ENCODE measurements at regions of chr10 and their contacts with region 1.

Region 1: DNA sequence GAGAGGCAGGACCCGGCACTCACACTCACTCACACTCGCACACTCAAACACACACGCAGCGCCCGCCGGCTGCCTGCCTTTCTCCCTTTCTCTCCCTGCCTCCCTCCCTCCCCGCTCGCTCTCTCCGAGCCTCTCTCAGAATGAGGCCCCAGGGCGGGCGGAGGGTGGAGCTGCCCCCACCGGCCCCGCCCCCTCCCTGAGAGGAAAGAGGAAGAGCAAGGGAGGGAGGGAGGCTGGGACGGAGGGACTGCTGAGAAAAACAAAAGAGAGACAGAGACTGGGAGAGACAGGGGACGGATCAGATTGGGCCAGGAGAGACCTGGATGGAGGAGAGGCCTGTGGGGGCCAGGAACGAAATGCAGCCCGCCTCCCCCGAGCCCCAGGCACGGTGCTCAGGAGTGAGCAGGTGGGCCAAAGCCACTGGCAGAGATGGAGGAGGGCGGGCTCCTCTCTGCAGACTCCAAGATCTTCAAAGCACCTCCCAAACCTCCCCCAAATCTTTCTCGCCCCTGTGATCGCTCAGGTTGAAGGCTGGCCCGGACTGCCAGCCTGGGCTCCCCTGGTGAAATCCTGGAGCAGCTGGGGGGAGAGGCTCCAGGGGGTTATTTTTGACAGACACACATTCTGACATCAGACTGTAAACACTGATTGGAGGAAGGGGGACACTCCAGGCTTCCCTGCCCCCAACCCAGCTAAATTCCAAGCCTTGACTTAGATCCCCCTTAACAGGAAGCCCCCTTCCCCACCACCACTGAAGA is 5.1 kb downstream of the LDB1 start:
- DNase-seq: peak; percentile 81
- H3K4me3 ChIP-seq: peak overlapping the region in 2 of 3 experiments; percentile 32 to 58
- H3K27ac ChIP-seq: no peak overlapping the region
- H3K4me1 ChIP-seq: peaks cover 56% of the 10 kb centered on the region
- H3K27me3 ChIP-seq: no peaks in the 10 kb centered on the region
- CTCF ChIP-seq: no peak
- POLR2A ChIP-seq: peak; percentile 76

Region 2: DNA sequence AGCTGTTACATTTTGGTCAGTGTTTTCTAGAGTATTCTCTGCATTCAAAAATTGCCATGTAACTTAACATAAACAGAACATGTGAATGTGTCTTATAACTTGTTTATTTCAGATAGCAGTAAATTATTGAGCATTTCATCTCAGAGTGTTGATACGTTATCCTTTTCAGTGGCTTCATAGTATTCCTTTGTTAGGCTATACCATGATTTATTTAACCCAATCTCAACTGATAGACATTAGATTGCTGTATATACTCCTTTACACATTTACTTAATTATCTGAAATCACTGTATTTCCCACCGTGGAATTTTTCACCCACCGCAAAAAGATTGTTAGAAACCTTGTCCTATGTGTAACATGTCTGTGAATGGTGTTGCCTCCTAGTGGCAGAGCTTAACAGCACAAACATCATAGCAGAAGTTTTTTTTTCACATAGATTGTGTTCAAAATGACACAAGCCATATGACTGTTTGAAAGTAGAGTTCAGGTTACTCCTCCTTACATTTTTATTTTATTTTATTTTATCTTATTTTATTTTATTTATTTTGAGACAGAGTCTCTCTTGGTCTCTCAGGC is 1180.9 kb before region 1 on chr10:
- CTCF ChIA-PET with region 1: no interaction called
- POLR2A ChIA-PET with region 1: no interaction called
- dilution Hi-C with region 1: no loop called
- intact Hi-C with region 1: no loop called
- DNase-seq: no peak
- H3K4me3 ChIP-seq: no peak overlapping the region
- H3K27ac ChIP-seq: no peak overlapping the region
- H3K4me1 ChIP-seq: no peaks in the 10 kb centered on the region
- H3K27me3 ChIP-seq: no peaks in the 10 kb centered on the region
- CTCF ChIP-seq: peak; percentile 33 to 39
- POLR2A ChIP-seq: no peak

Region 3: GRCh38 chr10:101879456-101880231 is 235.4 kb before region 1 on chr10:
- CTCF ChIA-PET with region 1: no interaction called
- POLR2A ChIA-PET with region 1: no interaction called
- dilution Hi-C with region 1: no loop called
- intact Hi-C with region 1: no loop called
- DNase-seq: no peak
- H3K4me3 ChIP-seq: no peak overlapping the region
- H3K27ac ChIP-seq: no peak overlapping the region
- H3K4me1 ChIP-seq: no peaks in the 10 kb centered on the region
- H3K27me3 ChIP-seq: no peaks in the 10 kb centered on the region
- CTCF ChIP-seq: no peak
- POLR2A ChIP-seq: no peak

Region 4: GRCh38 chr10:102064868-102065560 is 50.0 kb before region 1 on chr10 and contains the start of gene HPS6:
- CTCF ChIA-PET with region 1: interaction called, 5 read pairs
- POLR2A ChIA-PET with region 1: no interaction called
- dilution Hi-C with region 1: no loop called
- intact Hi-C with region 1: loop called (anchors 2 kb)
- DNase-seq: peak; percentile 90
- H3K4me3 ChIP-seq: peak within 1 kb of the TSS; percentile 42 to 89 (median 62)
- H3K27ac ChIP-seq: peak within 1 kb of the TSS; percentile 43
- H3K4me1 ChIP-seq: peaks cover 14% of the 10 kb centered on the region
- H3K27me3 ChIP-seq: no peaks in the 10 kb centered on the region
- CTCF ChIP-seq: peak in 1 of 2 donors; percentile 20
- POLR2A ChIP-seq: peak; percentile 94
- total RNA-seq, gene HPS6: 18.5 TPM in 2 replicates

Region 5: GRCh38 chr10:102072673-102073527 is 42.1 kb before region 1 on chr10:
- CTCF ChIA-PET with region 1: interaction called, 19 read pairs
- POLR2A ChIA-PET with region 1: interaction called, 3 read pairs
- dilution Hi-C with region 1: no loop called
- intact Hi-C with region 1: no loop called
- DNase-seq: peak; percentile 81
- H3K4me3 ChIP-seq: no peak overlapping the region
- H3K27ac ChIP-seq: no peak overlapping the region
- H3K4me1 ChIP-seq: no peaks in the 10 kb centered on the region
- H3K27me3 ChIP-seq: peaks cover 0 to 2% of the 10 kb centered on the region in 2 experiments
- CTCF ChIP-seq: peak; percentile 91 to 98
- POLR2A ChIP-seq: no peak

Region 6: GRCh38 chr10:102101152-102101551 is 13.9 kb before region 1 on chr10:
- CTCF ChIA-PET with region 1: interaction called, 12 read pairs
- POLR2A ChIA-PET with region 1: interaction called, 5 read pairs
- dilution Hi-C with region 1: no loop called
- intact Hi-C with region 1: no loop called
- DNase-seq: no peak
- H3K4me3 ChIP-seq: no peak overlapping the region
- H3K27ac ChIP-seq: no peak overlapping the region
- H3K4me1 ChIP-seq: peaks cover 9% of the 10 kb centered on the region
- H3K27me3 ChIP-seq: no peaks in the 10 kb centered on the region
- CTCF ChIP-seq: no peak
- POLR2A ChIP-seq: no peak

Region 7: GRCh38 chr10:102151774-102152544 is 36.9 kb after region 1 on chr10 and contains the start of gene NOLC1:
- CTCF ChIA-PET with region 1: no interaction called
- POLR2A ChIA-PET with region 1: no interaction called
- dilution Hi-C with region 1: no loop called
- intact Hi-C with region 1: loop called (anchors 5 kb)
- DNase-seq: peak; percentile 99
- H3K4me3 ChIP-seq: peak within 1 kb of the TSS; percentile 24 to 71 (median 66)
- H3K27ac ChIP-seq: peak within 1 kb of the TSS; percentile 80
- H3K4me1 ChIP-seq: peaks cover 17% of the 10 kb centered on the region
- H3K27me3 ChIP-seq: no peaks in the 10 kb centered on the region
- CTCF ChIP-seq: no peak
- POLR2A ChIP-seq: peak; percentile 97
- total RNA-seq, gene NOLC1: 68.2 and 73.1 TPM in 2 replicates

Measured in endothelial cell of umbilical vein (primary cell).